Activated naive CD4-positive, alpha-beta T cell treated with anti-CD3 and anti-CD28 coated beads for 36 hours (primary cell): ENCODE measurements at regions of chrX and their contacts with region 1.

Region 1: GRCh38 chrX:152958524-152959465 is 35.1 kb downstream of the PNMA5 start:
- DNase-seq: peak; percentile 93
- H3K4me3 Mint-ChIP-seq: peak overlapping the region; percentile 63
- H3K27ac Mint-ChIP-seq: peak overlapping the region; percentile 89
- H3K4me1 Mint-ChIP-seq: peaks cover 3% of the 10 kb centered on the region
- H3K27me3 Mint-ChIP-seq: no peaks in the 10 kb centered on the region

Region 2: GRCh38 chrX:153032397-153033118 is 73.8 kb after region 1 on chrX:
- CTCF ChIA-PET with region 1: interaction called, 6 read pairs
- intact Hi-C with region 1: loop called (anchors 1 kb)
- DNase-seq: peak; percentile 73
- H3K4me3 Mint-ChIP-seq: peak overlapping the region; percentile 81
- H3K27ac Mint-ChIP-seq: peak overlapping the region; percentile 87
- H3K4me1 Mint-ChIP-seq: peaks cover 8% of the 10 kb centered on the region
- H3K27me3 Mint-ChIP-seq: no peaks in the 10 kb centered on the region

Region 3: DNA sequence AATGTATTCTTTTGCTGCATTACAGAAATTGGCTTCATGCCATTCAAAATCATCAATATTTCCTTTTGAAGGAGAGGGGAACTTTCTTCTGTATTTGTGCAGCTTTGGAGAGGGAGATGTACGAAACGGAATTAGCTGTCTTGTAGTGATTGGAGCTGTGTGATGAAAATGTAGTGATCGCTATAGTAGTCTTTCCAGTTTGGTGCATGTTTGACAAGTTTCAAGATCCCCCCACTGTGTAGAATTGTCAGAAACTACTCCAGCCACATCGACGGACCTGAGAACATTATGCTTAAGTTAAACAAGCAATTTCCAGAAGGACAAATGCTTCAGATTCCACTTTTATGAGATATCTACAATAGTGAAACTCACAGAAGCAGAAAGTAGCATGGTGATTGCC is 198.7 kb after region 1 on chrX:
- CTCF ChIA-PET with region 1: no interaction called
- intact Hi-C with region 1: no loop called
- DNase-seq: no peak
- H3K4me3 Mint-ChIP-seq: no peak overlapping the region
- H3K27ac Mint-ChIP-seq: no peak overlapping the region
- H3K4me1 Mint-ChIP-seq: no peaks in the 10 kb centered on the region
- H3K27me3 Mint-ChIP-seq: peaks cover 2% of the 10 kb centered on the region

Region 4: DNA sequence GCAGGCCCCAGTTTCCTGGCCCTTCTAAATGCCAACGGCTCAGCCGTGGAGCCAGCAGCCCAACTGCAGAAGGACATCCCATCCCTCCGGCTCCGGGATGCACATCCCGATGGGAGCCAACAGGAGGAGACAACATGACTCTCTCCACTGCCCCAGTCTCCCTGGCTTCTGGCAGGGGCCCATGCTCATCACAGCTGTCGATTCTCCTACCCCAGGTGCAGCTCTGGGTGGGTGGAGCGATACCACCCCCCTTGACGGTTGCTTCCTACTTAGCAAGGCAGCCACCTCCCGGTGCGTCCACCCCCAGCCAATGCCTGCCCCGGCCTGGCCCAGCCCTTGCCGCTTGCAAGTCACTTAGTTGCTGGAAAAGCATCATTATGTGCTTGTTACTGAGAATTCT is 394.6 kb after region 1 on chrX:
- CTCF ChIA-PET with region 1: no interaction called
- intact Hi-C with region 1: no loop called
- DNase-seq: no peak
- H3K4me3 Mint-ChIP-seq: no peak overlapping the region
- H3K27ac Mint-ChIP-seq: no peak overlapping the region
- H3K4me1 Mint-ChIP-seq: peaks cover 3% of the 10 kb centered on the region
- H3K27me3 Mint-ChIP-seq: no peaks in the 10 kb centered on the region

Region 5: DNA sequence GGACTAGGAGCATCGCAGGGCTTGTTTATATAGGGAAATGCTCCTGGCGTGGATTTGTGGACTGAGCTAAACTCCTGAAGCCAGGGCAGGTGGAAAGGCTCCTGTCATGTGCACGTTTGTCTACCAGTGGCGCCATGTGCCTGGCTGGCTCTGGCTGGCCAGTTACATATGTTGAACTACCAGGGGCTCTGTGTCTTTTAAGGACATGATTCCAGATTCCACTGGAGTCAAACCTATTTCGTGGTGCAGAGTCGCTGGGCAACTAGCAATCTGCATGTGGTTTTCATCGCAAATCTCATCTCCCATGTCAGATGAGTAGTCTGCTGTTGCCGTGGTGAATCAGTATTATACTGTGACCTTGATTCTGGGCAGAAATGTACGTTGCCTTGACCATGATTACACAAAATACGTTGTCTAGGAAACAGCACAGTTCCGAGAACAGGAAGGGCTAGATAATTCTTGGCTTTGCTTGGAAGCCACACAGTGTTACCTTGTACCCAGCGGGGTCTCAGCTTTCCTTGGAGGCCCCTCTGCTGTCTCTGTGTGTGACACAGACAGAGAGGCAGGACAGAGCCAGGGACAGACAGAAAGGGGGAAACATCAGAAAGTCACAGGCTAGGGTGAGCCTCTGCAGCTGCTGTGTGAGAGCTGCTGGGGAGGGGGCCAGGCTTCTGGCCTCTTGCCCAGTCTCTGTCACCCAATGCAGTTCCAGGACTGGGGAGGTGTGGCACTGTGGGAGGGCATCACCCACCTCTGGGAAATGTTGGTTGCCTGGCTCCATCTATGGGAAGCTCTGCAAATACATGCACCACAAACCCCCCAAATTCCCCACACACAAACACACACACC is 423.1 kb after region 1 on chrX:
- CTCF ChIA-PET with region 1: no interaction called
- intact Hi-C with region 1: loop called (anchors 2 kb)
- DNase-seq: peak; percentile 44
- H3K4me3 Mint-ChIP-seq: no peak overlapping the region
- H3K27ac Mint-ChIP-seq: no peak overlapping the region
- H3K4me1 Mint-ChIP-seq: no peaks in the 10 kb centered on the region
- H3K27me3 Mint-ChIP-seq: no peaks in the 10 kb centered on the region

Region 6: DNA sequence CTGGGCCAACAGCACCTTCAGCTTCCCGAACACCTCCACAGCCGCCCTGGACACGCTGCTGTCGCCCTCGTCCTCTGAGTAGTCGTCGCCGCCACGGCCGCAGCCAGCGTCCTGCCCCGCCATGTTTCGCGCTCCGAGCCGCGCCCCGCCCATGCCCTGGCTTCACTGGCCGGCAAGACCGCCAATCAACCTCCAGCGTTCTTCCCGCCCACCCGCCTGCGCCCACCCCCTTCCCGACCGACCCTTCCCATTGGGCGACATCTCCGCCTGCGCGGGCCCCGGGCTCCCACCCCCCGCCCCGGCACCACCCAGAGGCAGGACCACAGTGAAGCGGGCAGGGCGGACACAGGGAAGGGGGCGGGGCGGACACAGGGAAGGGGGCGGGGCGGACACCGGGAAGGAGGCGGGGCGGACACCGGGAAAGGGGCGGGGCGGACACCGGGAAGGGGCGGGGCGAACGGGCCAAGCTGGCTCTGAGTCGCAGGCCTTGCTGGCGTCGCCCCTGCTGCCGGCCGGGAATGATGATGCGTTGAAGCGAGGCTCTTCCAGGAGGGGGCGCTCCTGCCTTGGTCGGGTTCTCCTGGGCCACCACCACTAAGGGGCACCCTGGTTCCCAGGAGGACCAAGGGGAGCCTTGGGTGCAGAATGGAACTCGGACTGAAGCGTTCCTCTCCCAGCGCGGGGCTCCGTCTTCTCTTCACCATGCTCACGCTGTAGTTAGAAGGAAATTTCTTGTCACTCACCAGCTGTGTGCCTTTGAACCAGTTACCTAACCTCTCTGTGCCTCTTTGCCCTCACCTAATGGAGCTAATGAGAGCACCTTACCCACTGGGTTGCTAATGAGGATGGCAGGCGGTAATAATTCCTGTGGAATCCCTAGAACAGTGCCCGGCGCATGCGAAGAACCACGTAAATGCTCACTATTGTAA is 511.9 kb after region 1 on chrX and contains the start of gene HAUS7:
- CTCF ChIA-PET with region 1: no interaction called
- intact Hi-C with region 1: loop called (anchors 1 kb)
- DNase-seq: peak; percentile 93
- H3K4me3 Mint-ChIP-seq: peak within 1 kb of the TSS; percentile 78
- H3K27ac Mint-ChIP-seq: peak within 1 kb of the TSS; percentile 77
- H3K4me1 Mint-ChIP-seq: peaks cover 15% of the 10 kb centered on the region
- H3K27me3 Mint-ChIP-seq: no peaks in the 10 kb centered on the region
- total RNA-seq, gene HAUS7: 63.5 to 68.5 TPM

Region 7: GRCh38 chrX:153662266-153662665 is 703.5 kb after region 1 on chrX:
- CTCF ChIA-PET with region 1: interaction called, 3 read pairs
- intact Hi-C with region 1: loop called (anchors 1 kb)
- DNase-seq: peak; percentile 69
- H3K4me3 Mint-ChIP-seq: peak overlapping the region; percentile 57
- H3K27ac Mint-ChIP-seq: no peak overlapping the region
- H3K4me1 Mint-ChIP-seq: no peaks in the 10 kb centered on the region
- H3K27me3 Mint-ChIP-seq: peaks cover 9% of the 10 kb centered on the region